ENCODE measurements at regions of chr3 and their contacts with region 1.

Region 1: DNA sequence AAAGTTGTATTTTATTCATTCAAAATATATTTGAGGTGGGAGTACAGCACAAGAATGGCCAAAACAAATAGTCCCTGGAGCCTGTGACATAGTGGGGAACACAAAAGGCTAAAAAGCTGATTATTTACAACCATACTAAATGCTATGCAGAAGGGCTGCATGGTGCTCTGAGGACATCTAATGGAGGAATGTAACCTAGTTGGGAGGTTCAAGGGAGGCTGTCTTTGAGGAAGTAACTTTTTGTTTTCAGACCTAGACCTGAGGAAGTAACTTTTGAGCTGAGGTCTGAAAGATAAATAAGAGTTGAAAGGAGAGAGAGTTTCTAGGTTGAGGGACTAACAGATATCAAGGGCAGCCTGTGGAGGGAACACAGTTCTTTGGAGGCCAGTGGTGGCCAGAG is 34.8 kb upstream of the RASA2 start:
- DNase-seq: peak; percentile 59
- ATAC-seq: peak; percentile 67
- H3K4me3 ChIP-seq: no peak overlapping the region
- H3K27ac ChIP-seq: no peak overlapping the region
- H3K4me1 ChIP-seq: peaks cover 45% of the 10 kb centered on the region
- H3K27me3 ChIP-seq: no peaks in the 10 kb centered on the region
- CTCF ChIP-seq: peak; percentile 84
- EP300 ChIP-seq: no peak
- POLR2A ChIP-seq: no peak
- RAD21 ChIP-seq: peak; percentile 65

Region 2: GRCh38 chr3:141192345-141192744 is 259.7 kb before region 1 on chr3:
- CTCF ChIA-PET with region 1: no interaction called
- POLR2A ChIA-PET with region 1: no interaction called
- in situ Hi-C with region 1: no loop called
- intact Hi-C with region 1: no loop called
- DNase-seq: peak; percentile 87
- ATAC-seq: peak; percentile 99
- H3K4me3 ChIP-seq: no peak overlapping the region
- H3K27ac ChIP-seq: no peak overlapping the region
- H3K4me1 ChIP-seq: no peaks in the 10 kb centered on the region
- H3K27me3 ChIP-seq: peaks cover 0 to 17% of the 10 kb centered on the region in 2 experiments; a peak in 2 of 5 replicates
- CTCF ChIP-seq: peak; percentile 99
- EP300 ChIP-seq: no peak
- POLR2A ChIP-seq: no peak
- RAD21 ChIP-seq: peak; percentile 95

Region 3: DNA sequence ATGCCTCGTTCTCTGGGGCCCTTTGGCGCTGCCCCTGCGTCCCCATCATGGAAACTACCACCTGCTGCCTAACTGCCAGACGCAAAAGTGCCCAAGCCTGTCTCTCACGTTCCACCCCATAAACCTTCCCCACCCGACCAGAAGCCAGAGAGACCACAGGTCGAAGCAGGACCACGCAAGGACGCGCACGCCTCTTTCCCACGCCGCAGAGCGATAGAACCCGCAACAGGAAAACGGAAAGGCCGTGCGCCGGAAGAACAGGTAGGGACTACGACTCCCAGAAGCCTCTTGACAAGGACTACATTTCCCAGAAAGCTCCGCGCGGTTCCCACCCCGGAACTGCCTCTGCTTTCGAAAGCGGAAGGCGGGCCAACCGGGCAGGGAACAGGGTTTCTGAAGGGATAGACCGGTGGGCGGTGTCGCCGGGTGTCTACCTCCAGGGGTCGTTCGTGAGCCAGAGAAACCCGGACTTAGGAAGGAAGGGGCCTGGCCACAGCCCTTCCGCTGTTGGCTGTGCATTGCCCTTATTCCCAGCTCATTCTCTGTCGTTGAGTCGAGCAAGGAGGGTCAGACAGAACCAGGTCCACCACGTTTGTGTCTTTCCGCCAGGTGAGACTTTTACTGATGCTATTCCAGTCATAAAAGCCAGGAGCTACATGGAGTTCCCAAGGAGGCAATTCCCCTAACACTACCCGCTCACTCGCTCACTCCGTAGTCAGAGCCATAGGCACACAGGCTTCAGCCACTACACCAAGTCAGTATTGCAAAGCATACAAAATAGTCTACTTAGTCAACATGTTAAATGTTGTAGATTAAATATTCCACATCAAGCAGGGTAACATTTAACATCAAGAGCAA is 140.3 kb before region 1 on chr3:
- CTCF ChIA-PET with region 1: interaction called, 9 read pairs
- POLR2A ChIA-PET with region 1: interaction called, 16 read pairs
- in situ Hi-C with region 1: loop called (anchors 5 kb)
- intact Hi-C with region 1: loop called (anchors 1 kb)
- DNase-seq: peak; percentile 96
- ATAC-seq: peak; percentile 92
- H3K4me3 ChIP-seq: peak overlapping the region; percentile 65 to 84 (median 83)
- H3K27ac ChIP-seq: peak overlapping the region; percentile 34
- H3K4me1 ChIP-seq: peaks cover 28% of the 10 kb centered on the region
- H3K27me3 ChIP-seq: no peaks in the 10 kb centered on the region
- CTCF ChIP-seq: peak; percentile 97
- EP300 ChIP-seq: peak in 1 of 2 experiments; percentile 45; a peak in 1 of 4 replicates
- POLR2A ChIP-seq: peak; percentile 71 to 95
- RAD21 ChIP-seq: peak; percentile 93

Region 4: DNA sequence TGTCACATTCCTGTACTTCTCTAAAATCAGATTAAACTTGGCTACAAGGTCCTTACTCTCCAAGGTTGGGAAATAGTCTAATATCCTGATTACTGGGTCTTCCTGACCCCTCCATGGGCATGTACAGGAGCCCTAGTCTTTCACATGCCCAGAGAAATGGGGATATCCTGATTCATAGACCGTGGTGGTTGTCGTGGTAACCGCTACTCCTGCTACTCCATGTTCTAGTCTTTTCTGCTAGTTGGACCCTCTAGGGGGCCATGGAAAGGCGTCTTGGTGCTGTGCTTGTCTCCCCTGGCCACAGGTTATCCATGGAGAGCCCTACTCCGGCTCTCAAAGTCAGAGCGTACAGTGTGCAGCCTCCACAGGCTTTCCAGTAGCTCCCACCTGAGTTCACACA is 96.8 kb before region 1 on chr3:
- CTCF ChIA-PET with region 1: interaction called, 15 read pairs
- POLR2A ChIA-PET with region 1: no interaction called
- in situ Hi-C with region 1: loop called (anchors 5 kb)
- intact Hi-C with region 1: no loop called
- DNase-seq: no peak
- ATAC-seq: no peak
- H3K4me3 ChIP-seq: no peak overlapping the region
- H3K27ac ChIP-seq: no peak overlapping the region
- H3K4me1 ChIP-seq: no peaks in the 10 kb centered on the region
- H3K27me3 ChIP-seq: no peaks in the 10 kb centered on the region; a peak in 1 of 5 replicates
- CTCF ChIP-seq: no peak
- EP300 ChIP-seq: no peak
- POLR2A ChIP-seq: no peak
- RAD21 ChIP-seq: no peak